ENCODE measurements at regions of chr7 and their contacts with region 1.

Region 1: DNA sequence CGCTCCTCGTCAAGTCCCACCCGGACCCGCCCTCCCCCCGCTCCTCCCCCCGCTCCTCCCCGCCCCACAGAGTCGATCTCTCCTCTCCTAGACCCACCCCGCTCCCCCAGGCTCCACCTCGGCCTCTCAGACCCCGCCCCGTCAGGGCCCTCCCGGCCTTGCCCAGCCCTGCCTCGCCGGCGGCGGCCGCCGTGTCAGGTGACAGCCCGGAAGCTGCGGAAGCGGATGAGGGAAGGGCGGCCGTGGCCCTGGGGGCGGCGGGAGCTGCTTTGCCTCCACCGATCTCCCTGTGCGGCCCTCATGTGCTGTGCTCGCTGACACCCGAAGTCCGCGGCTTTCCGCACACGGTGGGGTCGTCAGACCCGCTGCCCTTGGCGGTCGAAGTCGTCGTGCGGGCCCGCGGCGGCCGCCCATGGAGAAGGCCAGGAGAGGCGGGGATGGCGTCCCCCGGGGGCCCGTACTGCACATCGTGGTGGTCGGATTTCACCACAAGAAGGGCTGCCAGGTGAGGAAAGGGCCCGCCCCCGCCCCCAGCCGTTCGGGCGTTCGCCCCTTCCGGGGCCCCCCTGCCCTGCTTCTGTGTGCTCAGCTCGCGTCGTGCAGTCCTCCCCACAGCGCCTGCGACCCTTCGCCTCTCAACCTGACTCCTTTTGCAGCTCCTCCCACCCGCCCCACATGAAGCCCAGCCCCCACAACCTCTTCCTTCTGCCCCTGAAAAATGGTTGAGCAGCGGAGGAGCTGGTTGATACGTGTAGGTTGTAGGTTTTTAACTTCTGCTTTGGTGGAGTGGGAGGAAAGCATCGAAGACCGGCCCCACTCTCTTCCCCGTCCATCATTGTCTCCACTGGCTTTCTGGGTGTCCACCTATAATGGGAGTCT is at the start of gene AVL9:
- H3K4me3 ChIP-seq: peak within 1 kb of the TSS; percentile 94
- H3K27ac ChIP-seq: peak within 1 kb of the TSS; percentile 97
- H3K4me1 ChIP-seq: no peaks in the 10 kb centered on the region; the same call in 1 of the 2 replicates
- CTCF ChIP-seq: peak; percentile 16; the same call in 1 of the 2 replicates

Region 2: GRCh38 chr7:32506266-32507054 is 10.9 kb after region 1 on chr7:
- CTCF ChIA-PET with region 1: no interaction called
- POLR2A ChIA-PET with region 1: interaction called, 12 read pairs
- H3K4me3 ChIP-seq: no peak overlapping the region
- H3K27ac ChIP-seq: no peak overlapping the region
- H3K4me1 ChIP-seq: no peaks in the 10 kb centered on the region
- CTCF ChIP-seq: no peak

Region 3: DNA sequence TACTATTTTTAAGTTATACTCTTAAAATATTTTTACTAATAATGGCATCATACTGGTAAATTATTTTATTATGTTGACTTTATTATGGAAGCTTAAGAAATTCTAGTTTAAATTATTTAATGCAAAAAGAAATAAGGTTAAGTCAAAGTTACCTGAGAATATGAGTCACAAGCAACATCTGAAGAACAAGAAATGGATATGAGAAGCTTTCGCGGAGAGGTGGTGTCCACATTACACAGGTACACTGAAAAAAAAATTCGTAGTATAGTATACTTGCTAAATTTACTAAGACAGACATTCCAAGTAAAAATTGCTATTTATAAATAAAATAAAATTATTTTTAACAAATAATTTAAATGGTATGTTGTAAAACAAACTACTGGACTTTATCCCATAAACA is 143.6 kb after region 1 on chr7:
- CTCF ChIA-PET with region 1: no interaction called
- POLR2A ChIA-PET with region 1: no interaction called
- H3K4me3 ChIP-seq: no peak overlapping the region
- H3K27ac ChIP-seq: no peak overlapping the region
- H3K4me1 ChIP-seq: no peaks in the 10 kb centered on the region
- CTCF ChIP-seq: no peak